Activated CD4-positive, alpha-beta T cell treated with anti-CD3 and anti-CD28 coated beads for 36 hours (primary cell): ENCODE measurements at regions of chr12 and their contacts with region 1.

Region 1: GRCh38 chr12:89019408-89020120 is 332.7 kb downstream of the DUSP6 start:
- DNase-seq: peak; percentile 82
- ATAC-seq: peak; percentile 88
- H3K4me3 Mint-ChIP-seq: no peak overlapping the region
- H3K27ac Mint-ChIP-seq: no peak overlapping the region
- H3K4me1 Mint-ChIP-seq: peaks cover 16% of the 10 kb centered on the region
- H3K27me3 Mint-ChIP-seq: peaks cover 4% of the 10 kb centered on the region

Region 2: GRCh38 chr12:88884600-88884999 is 135.0 kb before region 1 on chr12:
- CTCF ChIA-PET with region 1: no interaction called
- POLR2A ChIA-PET with region 1: no interaction called
- intact Hi-C with region 1: no loop called
- DNase-seq: no peak
- ATAC-seq: no peak
- H3K4me3 Mint-ChIP-seq: no peak overlapping the region
- H3K27ac Mint-ChIP-seq: no peak overlapping the region
- H3K4me1 Mint-ChIP-seq: no peaks in the 10 kb centered on the region
- H3K27me3 Mint-ChIP-seq: no peaks in the 10 kb centered on the region

Region 3: DNA sequence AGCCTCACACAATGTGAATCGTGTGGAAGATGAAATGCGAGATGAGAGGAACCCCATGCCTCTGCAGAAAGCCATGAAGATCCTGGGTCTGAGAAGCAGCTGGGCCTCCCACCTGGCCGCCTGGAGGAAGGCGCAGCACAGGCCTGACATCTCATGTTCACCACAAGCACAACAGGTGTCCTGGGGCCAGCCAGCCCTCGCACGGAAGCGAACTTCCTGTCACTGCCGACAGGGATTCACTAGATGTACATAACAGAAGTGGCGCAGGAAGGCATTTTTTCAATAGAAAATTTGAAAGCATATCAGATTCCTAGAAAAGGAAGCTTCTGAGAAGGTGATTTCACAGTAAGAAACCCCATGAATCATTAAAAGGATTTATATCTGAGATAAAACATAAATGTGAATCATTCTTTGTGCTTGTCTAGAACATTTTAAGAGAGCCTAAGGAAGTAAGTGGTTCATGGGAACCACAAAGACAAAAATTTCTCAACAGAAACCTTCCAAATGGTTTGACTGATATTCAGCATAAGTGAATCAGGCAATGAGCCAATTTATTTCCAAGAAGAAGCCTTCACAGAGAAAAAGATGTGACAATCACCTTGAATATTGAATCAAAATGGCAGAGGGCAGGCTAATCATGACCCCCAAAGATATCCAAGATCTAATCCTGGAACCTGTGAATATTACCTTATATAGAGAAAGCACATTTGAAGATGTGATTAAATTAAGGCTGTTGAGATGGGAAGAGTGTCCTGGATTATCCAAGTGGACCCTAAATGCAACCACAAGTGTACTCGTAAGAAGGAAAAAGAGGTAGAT is 20.8 kb after region 1 on chr12:
- CTCF ChIA-PET with region 1: interaction called, 48 read pairs
- POLR2A ChIA-PET with region 1: interaction called, 11 read pairs
- intact Hi-C with region 1: loop called (anchors 1 kb)
- DNase-seq: peak; percentile 92
- ATAC-seq: peak; percentile 78
- H3K4me3 Mint-ChIP-seq: peak overlapping the region; percentile 40
- H3K27ac Mint-ChIP-seq: peak overlapping the region; percentile 99
- H3K4me1 Mint-ChIP-seq: peaks cover 54% of the 10 kb centered on the region
- H3K27me3 Mint-ChIP-seq: no peaks in the 10 kb centered on the region

Region 4: GRCh38 chr12:89117448-89118034 is 98.0 kb after region 1 on chr12:
- CTCF ChIA-PET with region 1: no interaction called
- POLR2A ChIA-PET with region 1: no interaction called
- intact Hi-C with region 1: no loop called
- DNase-seq: no peak
- ATAC-seq: no peak
- H3K4me3 Mint-ChIP-seq: no peak overlapping the region
- H3K27ac Mint-ChIP-seq: no peak overlapping the region
- H3K4me1 Mint-ChIP-seq: peaks cover 4% of the 10 kb centered on the region
- H3K27me3 Mint-ChIP-seq: no peaks in the 10 kb centered on the region

Region 5: DNA sequence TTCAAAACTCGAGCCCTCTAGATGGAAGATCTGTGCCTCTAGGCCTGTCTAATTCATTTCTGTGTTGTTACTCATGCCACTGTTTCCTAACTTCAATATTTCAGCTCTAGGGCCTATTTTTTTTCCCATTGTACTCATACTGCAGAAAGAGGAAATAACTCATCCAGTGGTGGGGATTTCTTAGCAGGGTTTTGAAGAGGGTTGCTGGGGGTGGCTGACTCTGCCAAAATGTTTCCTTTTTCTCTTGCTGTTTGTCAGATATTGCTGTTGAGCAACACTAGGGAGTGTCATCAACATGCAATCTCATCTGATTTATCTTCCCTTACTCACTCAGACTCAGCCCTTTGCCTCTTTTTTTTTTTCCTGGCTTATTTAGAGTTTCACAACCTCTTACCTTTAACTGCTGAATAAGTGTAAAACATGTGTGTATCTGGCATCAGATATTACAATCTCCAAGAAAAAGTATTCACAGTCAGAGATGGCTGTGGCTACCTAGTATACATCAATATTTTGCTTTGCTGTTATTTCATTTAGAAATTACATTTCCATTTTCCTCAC is 143.2 kb after region 1 on chr12:
- CTCF ChIA-PET with region 1: interaction called, 3 read pairs
- POLR2A ChIA-PET with region 1: no interaction called
- intact Hi-C with region 1: loop called in 1 of 2 experiments (anchors 1 kb)
- DNase-seq: peak; percentile 82
- ATAC-seq: peak; percentile 91
- H3K4me3 Mint-ChIP-seq: no peak overlapping the region
- H3K27ac Mint-ChIP-seq: no peak overlapping the region
- H3K4me1 Mint-ChIP-seq: peaks cover 14% of the 10 kb centered on the region
- H3K27me3 Mint-ChIP-seq: no peaks in the 10 kb centered on the region

Region 6: DNA sequence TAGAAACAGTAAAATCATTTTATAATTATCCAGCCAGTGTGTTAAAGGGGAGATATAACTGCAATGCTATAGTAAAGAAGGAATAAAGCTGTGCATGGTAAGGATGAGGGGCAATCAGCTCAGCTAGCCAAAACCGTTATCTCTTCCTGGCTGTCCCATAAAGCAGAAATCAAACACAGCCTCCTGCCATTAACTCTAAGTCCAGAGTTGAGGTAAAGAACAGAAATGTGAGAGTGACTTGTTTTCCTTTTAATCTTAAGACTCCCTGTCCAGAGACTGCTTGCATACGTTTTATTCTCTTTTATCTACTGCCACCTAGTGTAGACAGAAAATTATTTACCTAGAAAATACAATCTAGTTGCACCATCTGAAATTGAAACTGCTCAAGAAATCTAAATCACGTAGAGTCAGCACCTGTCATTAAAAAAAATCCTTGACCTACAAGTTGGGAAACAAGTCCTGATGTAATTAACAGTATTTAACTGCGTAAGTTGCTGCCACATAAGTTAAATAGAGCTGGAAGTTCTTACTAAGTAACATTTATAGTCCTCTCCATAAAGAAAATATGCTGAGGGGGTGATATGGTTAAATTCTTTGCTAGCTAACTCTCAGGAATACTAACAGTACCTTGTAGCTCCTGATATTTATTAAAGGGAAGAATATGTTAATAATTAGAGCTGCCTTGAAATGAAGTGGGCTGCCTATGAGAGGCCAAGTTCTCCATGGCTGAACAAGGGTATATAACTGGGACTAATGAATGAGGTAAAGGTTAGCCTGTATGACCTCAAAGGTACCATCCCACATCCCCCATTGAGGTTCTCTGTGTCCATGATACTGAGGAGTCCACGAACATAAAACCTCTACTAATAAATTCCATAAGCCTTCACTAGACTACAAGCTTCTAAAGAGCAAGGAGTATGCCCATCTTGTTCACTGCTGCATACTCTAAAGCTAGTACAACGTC is 442.4 kb after region 1 on chr12:
- CTCF ChIA-PET with region 1: interaction called, 54 read pairs
- POLR2A ChIA-PET with region 1: no interaction called
- intact Hi-C with region 1: loop called (anchors 1 kb)
- DNase-seq: no peak
- ATAC-seq: peak; percentile 93
- H3K4me3 Mint-ChIP-seq: peak overlapping the region; percentile 13
- H3K27ac Mint-ChIP-seq: peak overlapping the region; percentile 68
- H3K4me1 Mint-ChIP-seq: peaks cover 20% of the 10 kb centered on the region
- H3K27me3 Mint-ChIP-seq: no peaks in the 10 kb centered on the region

Region 7: GRCh38 chr12:89524541-89525285 is 505.1 kb after region 1 on chr12 and contains the start of gene GALNT4:
- CTCF ChIA-PET with region 1: interaction called, 22 read pairs
- POLR2A ChIA-PET with region 1: interaction called, 3 read pairs
- intact Hi-C with region 1: loop called (anchors 1 kb)
- DNase-seq: peak; percentile 84
- ATAC-seq: peak; percentile 64
- H3K4me3 Mint-ChIP-seq: peak within 1 kb of the TSS; percentile 81
- H3K27ac Mint-ChIP-seq: peak within 1 kb of the TSS; percentile 94
- H3K4me1 Mint-ChIP-seq: peaks cover 53% of the 10 kb centered on the region
- H3K27me3 Mint-ChIP-seq: no peaks in the 10 kb centered on the region
- total RNA-seq, gene GALNT4: 3.0 to 4.6 TPM

Region 8: DNA sequence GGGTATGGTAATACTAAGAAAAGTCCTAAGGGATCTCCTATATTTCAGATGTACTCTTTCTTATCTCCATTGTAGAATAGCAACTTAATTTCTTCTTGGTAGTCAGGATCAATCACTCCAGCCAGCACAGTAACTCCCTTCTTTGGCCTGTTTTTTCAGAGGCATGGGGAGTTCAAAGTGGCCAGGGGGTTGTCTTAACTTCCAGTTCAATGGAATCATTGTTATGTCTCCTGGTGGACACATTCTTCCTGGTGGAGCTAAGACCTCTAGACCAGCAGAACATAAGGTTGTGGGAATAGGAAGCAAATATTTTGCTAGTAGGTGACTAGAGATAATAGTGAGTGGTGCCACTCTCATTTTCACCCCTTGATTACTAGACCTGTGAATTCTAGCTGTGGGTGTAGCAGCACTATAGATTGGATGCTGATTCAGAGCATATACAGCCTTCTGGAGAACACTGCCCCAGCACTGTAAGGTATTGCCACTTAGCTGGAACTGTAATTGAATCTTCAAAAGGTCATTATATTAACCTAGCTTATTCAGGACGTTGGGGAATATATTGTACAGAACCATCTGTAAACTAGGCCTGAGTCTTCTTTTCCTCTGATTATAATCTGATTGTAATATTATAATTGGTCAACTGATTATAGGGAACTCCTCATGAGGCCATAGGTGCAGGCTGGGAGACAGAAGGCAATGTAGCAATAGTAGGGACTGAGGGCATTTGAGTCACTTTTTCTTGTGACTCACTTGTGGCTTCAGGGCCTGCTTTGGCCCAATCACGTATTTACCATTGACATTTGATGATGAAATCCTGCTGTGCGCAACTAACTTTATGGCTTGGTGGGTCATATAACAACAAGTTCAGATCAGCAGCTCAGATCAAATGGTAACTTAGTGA is 749.3 kb after region 1 on chr12:
- CTCF ChIA-PET with region 1: no interaction called
- POLR2A ChIA-PET with region 1: no interaction called
- intact Hi-C with region 1: loop called in 1 of 2 experiments (anchors 5 kb)
- DNase-seq: peak; percentile 42
- ATAC-seq: peak; percentile 87
- H3K4me3 Mint-ChIP-seq: no peak overlapping the region
- H3K27ac Mint-ChIP-seq: peak overlapping the region; percentile 18
- H3K4me1 Mint-ChIP-seq: peaks cover 21% of the 10 kb centered on the region
- H3K27me3 Mint-ChIP-seq: no peaks in the 10 kb centered on the region

Region 9: GRCh38 chr12:90959538-90960139 is 1940.1 kb after region 1 on chr12:
- CTCF ChIA-PET with region 1: no interaction called
- POLR2A ChIA-PET with region 1: no interaction called
- intact Hi-C with region 1: loop called in 1 of 2 experiments (anchors 5 kb)
- DNase-seq: peak; percentile 27
- ATAC-seq: peak; percentile 51
- H3K4me3 Mint-ChIP-seq: no peak overlapping the region
- H3K27ac Mint-ChIP-seq: no peak overlapping the region
- H3K4me1 Mint-ChIP-seq: no peaks in the 10 kb centered on the region
- H3K27me3 Mint-ChIP-seq: no peaks in the 10 kb centered on the region